ENCODE measurements at regions of chr11 and their contacts with region 1.

Region 1: GRCh38 chr11:117316197-117316961 is at the start of gene BACE1:
- DNase-seq: peak; percentile 71
- ATAC-seq: peak; percentile 98
- H3K4me3 ChIP-seq: peak within 1 kb of the TSS; percentile 65 to 68
- H3K27ac ChIP-seq: peak within 1 kb of the TSS; percentile 61; the same call in 1 of the 2 replicates
- H3K4me1 ChIP-seq: peaks cover 7 to 16% of the 10 kb centered on the region in 2 experiments; a peak in 3 of 4 replicates
- H3K27me3 ChIP-seq: no peaks in the 10 kb centered on the region
- CTCF ChIP-seq: peak; percentile 34 to 46 (median 34); a peak in 4 of 6 replicates
- POLR2A ChIP-seq: no peak
- RAD21 ChIP-seq: peak; percentile 51; the same call in 1 of the 2 replicates
- total RNA-seq, gene BACE1: 8.5 TPM

Region 2: DNA sequence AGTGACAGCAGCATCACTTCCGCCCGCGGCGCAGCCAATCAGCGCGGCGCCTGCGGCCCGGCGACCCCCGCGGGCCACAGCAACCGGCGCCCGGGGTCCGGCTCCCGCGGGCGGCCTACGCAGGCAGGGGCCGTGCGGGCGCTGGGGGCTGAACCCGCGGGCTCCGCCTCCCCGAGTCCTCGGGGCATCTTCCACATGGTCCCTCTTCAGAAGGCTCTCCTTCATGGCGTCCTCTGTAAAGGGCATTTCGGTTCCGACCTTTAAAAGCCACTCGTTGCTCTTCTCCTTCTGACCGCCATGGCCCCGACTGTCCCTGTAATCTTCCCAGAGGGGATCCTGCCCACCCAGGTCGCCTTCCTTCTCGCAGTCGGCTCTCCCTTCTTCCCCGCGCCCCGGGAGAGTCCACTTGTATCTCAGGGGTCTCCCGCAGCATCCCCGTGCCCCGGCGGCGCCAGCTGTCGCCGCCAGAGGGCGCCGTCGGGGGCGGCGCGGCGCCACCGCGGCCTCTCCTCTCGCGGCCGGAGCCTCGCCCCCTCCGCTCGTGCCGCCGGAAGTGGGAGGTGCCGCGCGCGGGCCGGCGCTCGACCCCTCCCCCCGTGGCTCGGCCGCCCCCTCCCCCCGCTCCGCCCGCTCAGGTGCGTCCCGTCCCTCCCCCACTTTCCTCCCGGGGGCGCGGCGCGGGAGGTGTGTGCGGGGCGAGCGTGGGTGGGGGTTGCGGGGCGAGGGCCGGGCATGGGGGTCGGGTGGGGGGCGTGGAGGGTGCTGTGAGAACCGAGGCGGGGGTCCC is 84.1 kb before region 1 on chr11 and contains the start of gene RNF214:
- CTCF ChIA-PET with region 1: no interaction called
- POLR2A ChIA-PET with region 1: no interaction called
- RAD21 ChIA-PET with region 1: no interaction called
- intact Hi-C with region 1: loop called (anchors 1 kb)
- DNase-seq: no peak
- ATAC-seq: peak; percentile 89
- H3K4me3 ChIP-seq: peak within 1 kb of the TSS; percentile 69 to 80
- H3K27ac ChIP-seq: peak within 1 kb of the TSS; percentile 71
- H3K4me1 ChIP-seq: peaks cover 14 to 20% of the 10 kb centered on the region in 2 experiments; a peak in 3 of 4 replicates
- H3K27me3 ChIP-seq: no peaks in the 10 kb centered on the region
- CTCF ChIP-seq: peak; percentile 37 to 83 (median 72); a peak in 4 of 6 replicates
- POLR2A ChIP-seq: peak; percentile 46
- RAD21 ChIP-seq: no peak
- total RNA-seq, gene RNF214: 29.3 TPM

Region 3: DNA sequence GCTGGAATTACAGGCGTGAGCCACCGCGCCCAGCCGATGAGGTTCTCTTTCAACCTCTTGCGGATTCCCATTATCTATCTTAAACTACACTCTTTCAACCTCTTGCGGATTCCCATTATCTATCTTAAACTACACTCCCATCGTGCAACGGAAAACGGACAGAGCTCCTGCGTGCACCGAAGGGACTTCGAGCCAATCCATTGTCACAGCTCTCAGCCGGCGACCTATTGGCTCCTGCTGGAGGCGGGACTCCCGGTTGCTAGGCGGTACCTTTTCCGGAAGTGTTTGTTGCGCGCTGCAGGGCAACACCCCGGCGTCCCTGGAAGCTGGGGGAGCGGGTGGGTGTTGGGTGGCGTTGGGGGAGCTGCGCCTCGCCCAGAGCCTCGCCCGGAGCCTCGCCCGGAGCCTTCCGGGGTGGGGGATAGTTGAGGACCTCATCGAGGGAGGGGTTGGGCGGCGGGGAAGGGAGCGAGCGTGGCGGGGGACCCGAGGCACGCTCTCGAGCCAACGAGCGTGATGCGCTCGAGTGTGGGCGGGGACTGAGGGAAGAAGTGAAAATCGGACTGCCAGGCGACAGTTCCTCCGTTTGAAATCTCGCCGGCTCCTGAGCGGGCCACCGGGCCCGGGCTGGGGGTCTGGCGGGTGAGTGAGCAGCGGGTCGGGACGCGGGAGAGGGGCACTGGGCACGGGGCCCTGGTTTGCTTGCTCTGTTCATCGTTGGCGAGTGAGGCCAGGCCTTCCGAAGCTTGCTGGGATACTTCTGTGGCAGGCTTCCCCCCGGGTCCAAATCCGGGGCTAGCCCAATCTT is 11.4 kb after region 1 on chr11 and contains the start of gene CEP164:
- CTCF ChIA-PET with region 1: no interaction called
- POLR2A ChIA-PET with region 1: interaction called, 10 read pairs
- RAD21 ChIA-PET with region 1: no interaction called
- intact Hi-C with region 1: no loop called
- DNase-seq: peak; percentile 91
- ATAC-seq: peak; percentile 97
- H3K4me3 ChIP-seq: peak within 1 kb of the TSS; percentile 77 to 90
- H3K27ac ChIP-seq: peak within 1 kb of the TSS; percentile 57
- H3K4me1 ChIP-seq: peaks cover 0 to 23% of the 10 kb centered on the region in 2 experiments; a peak in 2 of 4 replicates
- H3K27me3 ChIP-seq: no peaks in the 10 kb centered on the region
- CTCF ChIP-seq: no peak
- POLR2A ChIP-seq: no peak
- RAD21 ChIP-seq: no peak
- total RNA-seq, gene CEP164: 22.2 TPM

Measured in HCT116 (cell line).